Right ventricle myocardium inferior (tissue), 1 donor: ENCODE measurements at regions of chr6 and their contacts with region 1.

Region 1: DNA sequence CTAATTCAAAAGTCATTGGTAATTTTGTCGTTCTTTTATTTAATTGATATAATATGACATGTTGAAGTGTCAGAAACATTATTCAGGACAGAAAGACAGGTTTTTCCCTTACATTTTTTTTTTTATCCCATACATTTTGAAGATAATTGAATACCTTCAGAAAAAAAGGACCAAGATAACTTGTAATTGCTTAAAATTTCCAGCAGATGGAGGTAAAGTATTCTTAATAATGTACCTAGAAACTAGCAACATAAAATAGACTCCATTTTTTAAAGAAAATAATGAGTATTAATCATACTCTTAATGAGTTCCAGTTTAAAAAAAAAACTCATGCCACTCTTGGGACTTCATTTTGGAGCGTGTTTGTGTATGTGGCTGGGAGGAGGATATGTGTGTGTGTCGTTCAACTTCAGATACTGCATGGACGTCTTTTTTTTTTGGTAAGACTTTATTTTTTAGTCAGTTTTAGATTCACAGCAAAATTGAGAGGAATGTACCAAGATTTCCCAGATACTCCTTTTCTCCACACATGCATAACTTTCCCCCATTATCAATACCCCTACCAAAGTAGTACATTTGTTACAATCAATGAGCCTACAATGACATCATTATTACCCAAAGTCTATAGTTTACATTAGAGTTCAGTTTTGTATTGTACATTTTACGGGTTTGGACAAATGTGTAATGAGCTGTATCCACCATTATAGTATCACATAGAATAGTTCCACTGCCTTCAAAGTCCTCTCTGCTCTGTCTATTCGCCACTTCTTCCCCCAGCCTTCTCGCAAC is 79.4 kb downstream of the ROS1 start:
- DNase-seq: no peak
- ATAC-seq: no peak

Region 2: DNA sequence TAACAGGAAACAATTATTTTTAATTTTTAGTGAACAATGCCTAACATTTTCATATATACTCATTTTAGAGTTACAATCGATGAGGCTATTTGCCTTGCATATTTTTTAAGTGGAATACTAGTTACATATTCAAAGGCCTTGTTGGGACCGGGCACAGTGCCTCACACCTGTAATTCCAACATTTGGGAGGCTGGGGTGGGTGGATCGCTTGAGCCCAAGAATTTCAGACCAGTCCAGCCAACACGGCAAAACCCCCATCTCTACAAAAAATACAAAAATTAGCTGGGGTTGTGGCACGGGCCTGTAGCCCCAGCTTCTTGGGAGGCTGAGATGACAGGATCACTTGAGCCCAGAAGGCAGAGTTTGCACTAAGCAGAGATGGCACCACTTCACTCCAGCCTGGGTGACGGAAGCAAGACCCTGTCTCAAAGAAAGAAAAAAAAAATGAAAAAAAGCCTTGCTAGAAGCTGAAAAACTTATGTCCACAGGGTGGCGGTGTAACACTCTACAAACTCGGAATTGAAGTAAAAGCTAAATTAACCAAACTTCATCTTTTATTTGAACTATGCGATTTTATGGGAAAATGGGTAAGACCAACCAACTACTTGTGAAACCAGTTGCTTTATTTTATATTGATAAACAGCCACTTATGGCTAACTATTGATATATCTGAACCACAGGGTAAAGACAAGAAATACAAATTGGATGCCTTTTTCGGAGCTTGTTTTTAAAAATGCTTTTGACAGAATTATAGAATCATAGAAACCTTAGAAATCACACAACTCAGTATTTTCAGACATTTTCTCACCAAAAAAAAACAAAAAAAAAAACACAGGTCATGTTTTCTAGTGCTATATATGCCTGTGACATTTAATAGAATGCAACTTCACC is 103.5 kb after region 1 on chr6:
- intact Hi-C with region 1: loop called (anchors 5 kb)
- DNase-seq: no peak
- ATAC-seq: no peak

Region 3: GRCh38 chr6:117555882-117556498 is 209.7 kb after region 1 on chr6:
- intact Hi-C with region 1: loop called (anchors 1 kb)
- DNase-seq: no peak
- ATAC-seq: no peak

Region 4: GRCh38 chr6:117829594-117830319 is 483.4 kb after region 1 on chr6:
- intact Hi-C with region 1: loop called (anchors 5 kb)
- DNase-seq: no peak
- ATAC-seq: no peak